ENCODE measurements at regions of chrX and their contacts with region 1.

Region 1: GRCh38 chrX:17082831-17083230 is 136.4 kb downstream of the REPS2 start:
- DNase-seq: peak; percentile 34
- H3K4me3 ChIP-seq: no peak overlapping the region
- H3K27ac ChIP-seq: no peak overlapping the region
- H3K4me1 ChIP-seq: peaks cover 10% of the 10 kb centered on the region
- H3K27me3 ChIP-seq: no peaks in the 10 kb centered on the region
- CTCF ChIP-seq: peak; percentile 26 to 44

Region 2: DNA sequence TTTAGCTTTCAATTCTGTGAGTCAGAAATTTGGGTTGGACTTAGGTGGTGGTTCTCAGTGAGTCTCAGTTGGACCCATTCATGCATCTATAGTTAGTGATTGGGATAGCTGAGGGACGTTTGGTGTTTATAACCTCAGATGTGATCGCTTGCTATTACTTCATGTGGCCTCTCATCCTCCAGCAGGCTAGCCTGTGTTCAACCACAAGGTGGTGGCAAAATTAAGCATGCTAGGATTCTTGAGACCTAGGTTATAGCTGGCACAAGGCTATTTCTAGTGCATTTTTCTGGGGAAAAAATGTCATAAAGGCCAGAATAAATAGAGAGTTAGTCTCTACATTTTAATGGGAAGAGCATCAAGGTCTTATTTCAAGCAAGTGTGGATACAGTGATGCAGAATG is 970.4 kb before region 1 on chrX:
- CTCF ChIA-PET with region 1: no interaction called
- dilution Hi-C with region 1: no loop called
- in situ Hi-C with region 1: no loop called
- intact Hi-C with region 1: no loop called
- DNase-seq: no peak
- H3K4me3 ChIP-seq: no peak overlapping the region
- H3K27ac ChIP-seq: no peak overlapping the region
- H3K4me1 ChIP-seq: no peaks in the 10 kb centered on the region
- H3K27me3 ChIP-seq: peaks cover 4% of the 10 kb centered on the region
- CTCF ChIP-seq: peak; percentile 21 to 25

Region 3: DNA sequence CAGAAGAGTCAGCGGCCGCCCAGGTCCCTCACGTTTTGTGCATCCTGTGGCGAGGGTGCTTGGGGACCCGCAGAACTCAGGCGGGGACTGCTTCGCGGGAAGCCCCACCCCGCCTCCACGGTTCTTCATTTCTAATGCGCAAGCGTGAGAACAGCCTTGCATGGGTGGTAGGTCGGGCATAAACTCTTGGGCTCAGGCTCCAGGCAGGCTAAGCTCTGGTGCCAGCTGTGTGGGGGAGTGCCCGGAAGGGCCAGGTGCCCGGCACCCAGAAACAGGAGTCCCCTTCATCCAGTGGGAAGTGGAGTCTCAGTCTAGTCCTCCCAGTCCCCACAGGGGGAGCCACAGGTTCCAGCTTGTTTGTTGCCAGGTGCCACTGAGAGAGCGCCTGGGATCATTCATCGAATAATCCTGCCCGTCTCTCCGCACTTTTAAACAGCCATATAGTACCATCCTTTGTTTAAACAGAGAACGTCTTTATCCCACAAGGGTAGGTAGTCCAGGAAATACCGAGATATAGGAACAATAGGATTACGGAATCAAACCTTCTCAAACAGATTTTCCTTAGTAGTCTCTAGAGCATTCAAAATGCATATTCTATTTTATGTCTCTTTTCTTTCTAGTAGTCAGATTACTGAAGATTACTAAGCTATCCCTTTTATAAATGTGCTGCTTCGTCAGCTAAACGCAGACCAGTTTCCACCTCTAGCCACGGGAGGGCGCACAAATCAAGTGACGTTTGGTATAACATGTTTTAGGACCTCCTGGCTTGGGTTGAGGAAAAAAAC is 199.9 kb before region 1 on chrX:
- CTCF ChIA-PET with region 1: interaction called, 5 read pairs
- dilution Hi-C with region 1: no loop called
- in situ Hi-C with region 1: no loop called
- intact Hi-C with region 1: loop called (anchors 2 kb)
- DNase-seq: peak; percentile 66
- H3K4me3 ChIP-seq: peak overlapping the region; percentile 6 to 42 (median 29)
- H3K27ac ChIP-seq: peak overlapping the region; percentile 20
- H3K4me1 ChIP-seq: peaks cover 4% of the 10 kb centered on the region
- H3K27me3 ChIP-seq: no peaks in the 10 kb centered on the region
- CTCF ChIP-seq: peak; percentile 77 to 92

Region 4: GRCh38 chrX:17007206-17007683 is 75.6 kb before region 1 on chrX:
- CTCF ChIA-PET with region 1: no interaction called
- dilution Hi-C with region 1: no loop called
- in situ Hi-C with region 1: no loop called
- intact Hi-C with region 1: loop called (anchors 1 kb)
- DNase-seq: peak; percentile 6
- H3K4me3 ChIP-seq: no peak overlapping the region
- H3K27ac ChIP-seq: no peak overlapping the region
- H3K4me1 ChIP-seq: no peaks in the 10 kb centered on the region
- H3K27me3 ChIP-seq: peaks cover 2% of the 10 kb centered on the region
- CTCF ChIP-seq: peak; percentile 10 to 22

Region 5: DNA sequence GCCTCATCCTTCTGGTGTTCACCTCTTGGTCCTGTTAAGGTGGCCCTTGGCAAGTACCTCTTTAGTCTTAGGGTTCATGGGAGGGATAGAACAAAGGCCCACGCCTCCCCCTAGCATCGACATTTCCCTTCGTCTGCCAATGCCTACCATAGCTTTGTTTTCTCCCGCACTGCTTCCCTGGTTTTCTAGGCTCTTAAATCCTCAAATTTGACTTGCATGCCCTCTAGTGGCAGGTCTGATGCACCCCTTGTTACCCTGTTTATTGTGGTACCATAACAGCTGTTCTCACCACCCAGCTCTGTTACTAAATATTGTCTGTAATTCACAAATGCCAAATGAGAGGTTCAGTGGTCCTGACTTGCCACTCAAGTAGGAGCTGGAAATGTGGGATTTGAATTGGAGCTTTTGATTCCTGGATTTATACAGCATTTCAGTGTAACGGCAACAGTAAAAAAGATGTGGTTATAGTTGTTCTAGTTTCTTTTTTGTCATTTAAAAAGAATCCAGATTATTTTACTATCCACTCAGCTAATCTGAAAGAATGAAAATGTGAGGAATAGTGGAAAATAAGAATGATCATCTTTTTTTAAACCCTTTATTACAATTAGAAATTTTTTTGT is 36.2 kb before region 1 on chrX:
- CTCF ChIA-PET with region 1: no interaction called
- dilution Hi-C with region 1: no loop called
- in situ Hi-C with region 1: no loop called
- intact Hi-C with region 1: loop called (anchors 1 kb)
- DNase-seq: peak; percentile 56
- H3K4me3 ChIP-seq: no peak overlapping the region
- H3K27ac ChIP-seq: no peak overlapping the region
- H3K4me1 ChIP-seq: no peaks in the 10 kb centered on the region
- H3K27me3 ChIP-seq: no peaks in the 10 kb centered on the region
- CTCF ChIP-seq: peak; percentile 93 to 97

Region 6: GRCh38 chrX:17072721-17073230 is 10.1 kb before region 1 on chrX:
- CTCF ChIA-PET with region 1: interaction called, 16 read pairs
- dilution Hi-C with region 1: no loop called
- in situ Hi-C with region 1: no loop called
- intact Hi-C with region 1: no loop called
- DNase-seq: no peak
- H3K4me3 ChIP-seq: no peak overlapping the region
- H3K27ac ChIP-seq: no peak overlapping the region
- H3K4me1 ChIP-seq: peaks cover 32% of the 10 kb centered on the region
- H3K27me3 ChIP-seq: no peaks in the 10 kb centered on the region
- CTCF ChIP-seq: no peak

Region 7: GRCh38 chrX:17160971-17161370 is 78.1 kb after region 1 on chrX:
- CTCF ChIA-PET with region 1: interaction called, 15 read pairs
- dilution Hi-C with region 1: no loop called
- in situ Hi-C with region 1: no loop called
- intact Hi-C with region 1: no loop called
- DNase-seq: no peak
- H3K4me3 ChIP-seq: no peak overlapping the region
- H3K27ac ChIP-seq: no peak overlapping the region
- H3K4me1 ChIP-seq: no peaks in the 10 kb centered on the region
- H3K27me3 ChIP-seq: no peaks in the 10 kb centered on the region
- CTCF ChIP-seq: peak; percentile 21 to 39

Region 8: DNA sequence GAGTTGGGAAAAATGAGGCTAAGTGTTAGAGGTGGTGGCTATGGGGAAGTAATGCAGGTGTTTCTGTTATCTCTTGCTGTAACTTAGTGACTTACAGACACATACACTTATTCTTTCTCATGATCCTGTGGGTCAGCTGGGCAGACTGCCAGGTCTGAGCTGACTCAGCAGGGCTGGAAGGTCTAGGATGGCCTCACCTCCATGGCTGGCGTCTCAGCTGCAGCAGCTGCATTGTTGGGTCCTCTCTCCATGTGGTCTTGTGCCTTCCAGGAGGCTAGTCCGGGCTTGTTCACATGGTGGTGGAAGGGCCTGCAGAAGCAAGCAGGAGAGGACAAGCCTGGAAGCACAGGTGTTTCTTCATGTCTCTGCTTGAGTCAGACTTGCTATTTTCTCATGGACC is 464.8 kb after region 1 on chrX:
- CTCF ChIA-PET with region 1: no interaction called
- dilution Hi-C with region 1: no loop called
- in situ Hi-C with region 1: no loop called
- intact Hi-C with region 1: no loop called
- DNase-seq: peak; percentile 99
- H3K4me3 ChIP-seq: no peak overlapping the region
- H3K27ac ChIP-seq: peak overlapping the region; percentile 63
- H3K4me1 ChIP-seq: peaks cover 50% of the 10 kb centered on the region
- H3K27me3 ChIP-seq: no peaks in the 10 kb centered on the region
- CTCF ChIP-seq: no peak

Measured in mammary epithelial cell (primary cell).